PC-9 (cell line): ENCODE measurements at regions of chr12 and their contacts with region 1.

Region 1: GRCh38 chr12:31959161-31959700 is at the start of gene RESF1:
- DNase-seq: peak; percentile 76 to 95
- H3K4me3 ChIP-seq: peak within 1 kb of the TSS; percentile 86
- H3K27ac ChIP-seq: peak within 1 kb of the TSS; percentile 45
- H3K4me1 ChIP-seq: peaks cover 12% of the 10 kb centered on the region
- H3K27me3 ChIP-seq: no peaks in the 10 kb centered on the region
- CTCF ChIP-seq: no peak
- total RNA-seq, gene RESF1: 25.4 and 33.8 TPM in 2 replicates

Region 2: DNA sequence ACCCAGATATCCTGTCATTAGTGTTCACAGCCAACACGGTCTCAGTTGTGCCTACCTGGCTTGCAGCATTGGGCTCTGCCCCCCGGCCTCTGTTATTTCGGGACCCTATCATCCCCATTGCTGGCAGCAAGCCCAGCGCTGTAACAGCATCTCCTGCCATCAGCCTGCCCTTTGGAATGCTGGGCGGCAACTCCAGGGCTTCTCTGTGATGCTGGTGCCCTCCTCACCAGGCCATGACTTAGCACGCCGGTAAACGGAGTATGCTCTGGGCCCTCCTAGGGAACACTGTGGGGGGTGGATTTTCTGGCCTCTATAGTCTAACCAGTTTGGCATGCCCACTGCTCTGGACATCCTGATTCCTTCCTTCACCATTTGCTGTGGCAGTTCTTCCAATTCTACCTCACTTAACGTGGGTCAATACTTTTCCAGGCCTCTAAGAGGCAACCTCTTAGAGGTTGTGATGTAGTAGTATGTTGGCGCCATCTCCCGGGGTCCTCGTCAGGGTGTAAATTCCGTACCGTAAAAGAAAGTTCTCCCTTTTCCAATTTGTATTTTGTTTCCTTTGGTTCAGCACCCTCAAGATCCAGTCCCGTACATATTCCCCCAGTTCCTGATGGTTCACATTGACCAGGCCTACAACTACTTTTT is 713.3 kb before region 1 on chr12:
- CTCF ChIA-PET with region 1: no interaction called
- POLR2A ChIA-PET with region 1: no interaction called
- intact Hi-C with region 1: loop called (anchors 5 kb)
- DNase-seq: peak in 1 of 2 experiments; percentile 33
- H3K4me3 ChIP-seq: no peak overlapping the region
- H3K27ac ChIP-seq: no peak overlapping the region
- H3K4me1 ChIP-seq: no peaks in the 10 kb centered on the region
- H3K27me3 ChIP-seq: no peaks in the 10 kb centered on the region
- CTCF ChIP-seq: no peak

Region 3: DNA sequence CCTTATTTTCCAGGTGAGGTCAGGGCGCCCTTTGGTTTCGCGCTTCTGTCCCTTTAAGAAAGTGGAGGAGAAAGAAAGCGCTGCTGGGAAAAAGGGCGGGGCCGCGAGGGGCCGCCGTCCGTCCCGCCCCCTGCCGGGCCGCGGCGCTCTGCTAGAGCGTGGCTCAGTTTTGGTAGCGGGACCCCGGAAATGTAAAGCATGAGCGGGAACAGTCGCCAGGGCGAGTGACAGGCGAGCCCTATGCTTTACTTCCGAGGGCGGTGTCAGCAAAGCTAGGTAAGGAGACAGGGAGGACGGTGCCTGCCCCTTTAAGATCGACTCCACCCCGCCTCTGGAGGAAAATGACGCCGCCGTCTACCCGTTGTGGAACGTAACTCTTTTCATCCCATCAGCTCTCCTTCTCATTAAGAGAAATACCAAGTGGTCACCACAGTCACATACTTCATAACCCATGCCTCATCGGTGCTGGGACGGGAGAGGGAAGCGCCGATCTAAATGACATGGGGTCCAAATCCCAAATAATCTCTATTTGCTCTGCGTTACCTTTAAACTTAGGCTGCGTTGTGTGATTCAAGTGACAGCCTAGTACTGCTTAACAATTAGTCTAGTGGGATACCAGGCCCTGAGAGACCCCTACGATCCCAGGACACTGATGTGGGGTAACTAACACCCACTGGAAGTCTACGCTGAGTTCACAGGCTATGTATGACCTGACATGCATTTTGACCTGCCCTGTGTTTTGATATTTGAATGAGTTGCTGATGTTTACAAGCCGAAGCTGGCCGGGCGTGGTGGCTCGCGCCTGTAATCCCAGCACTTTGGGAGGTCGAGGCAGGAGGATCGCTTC is 299.9 kb before region 1 on chr12 and contains the start of gene ETFBKMT:
- CTCF ChIA-PET with region 1: no interaction called
- POLR2A ChIA-PET with region 1: no interaction called
- intact Hi-C with region 1: loop called (anchors 2 kb)
- DNase-seq: peak; percentile 94 to 97
- H3K4me3 ChIP-seq: peak within 1 kb of the TSS; percentile 62
- H3K27ac ChIP-seq: peak within 1 kb of the TSS; percentile 63
- H3K4me1 ChIP-seq: peaks cover 17% of the 10 kb centered on the region
- H3K27me3 ChIP-seq: no peaks in the 10 kb centered on the region
- CTCF ChIP-seq: peak; percentile 60
- total RNA-seq, gene ETFBKMT: 2.2 and 2.4 TPM in 2 replicates

Region 4: GRCh38 chr12:31682136-31682962 is 276.9 kb before region 1 on chr12:
- CTCF ChIA-PET with region 1: interaction called, 5 read pairs
- POLR2A ChIA-PET with region 1: interaction called, 6 read pairs
- intact Hi-C with region 1: loop called (anchors 2 kb)
- DNase-seq: peak; percentile 68 to 72
- H3K4me3 ChIP-seq: no peak overlapping the region
- H3K27ac ChIP-seq: no peak overlapping the region
- H3K4me1 ChIP-seq: no peaks in the 10 kb centered on the region
- H3K27me3 ChIP-seq: no peaks in the 10 kb centered on the region
- CTCF ChIP-seq: peak; percentile 87

Region 5: DNA sequence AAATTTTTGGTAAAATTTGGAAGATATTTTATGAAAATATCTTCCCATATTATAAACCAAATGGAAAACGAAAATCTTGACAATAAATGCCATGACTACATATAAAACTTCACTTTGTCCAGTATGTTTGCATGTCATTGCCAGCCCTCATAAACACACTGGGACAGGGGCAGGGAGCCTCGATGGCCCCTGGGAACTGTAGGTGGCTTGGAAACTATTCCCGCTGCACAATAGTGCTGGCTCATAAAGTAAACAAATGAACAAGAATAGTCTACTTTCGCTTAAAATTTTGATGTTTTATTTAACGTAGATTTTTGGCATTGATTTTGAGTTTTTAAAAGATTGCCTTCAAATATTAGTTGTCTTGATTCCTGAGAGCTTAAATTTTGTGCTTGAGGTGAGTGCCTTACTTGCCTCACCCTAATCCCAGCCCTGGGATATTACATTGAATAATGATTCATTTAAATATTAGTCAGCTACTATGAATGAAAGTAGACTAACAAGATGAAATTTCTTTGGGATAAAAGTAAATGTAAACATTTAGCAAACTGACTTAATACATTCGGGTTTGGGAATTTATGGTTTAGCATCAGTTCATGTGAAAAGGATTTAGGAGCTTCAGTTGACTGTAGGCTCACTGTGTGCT is 1011.4 kb after region 1 on chr12:
- CTCF ChIA-PET with region 1: no interaction called
- POLR2A ChIA-PET with region 1: no interaction called
- intact Hi-C with region 1: no loop called
- DNase-seq: no peak
- H3K4me3 ChIP-seq: no peak overlapping the region
- H3K27ac ChIP-seq: no peak overlapping the region
- H3K4me1 ChIP-seq: peaks cover 7% of the 10 kb centered on the region; the same call in 1 of the 2 replicates
- H3K27me3 ChIP-seq: no peaks in the 10 kb centered on the region
- CTCF ChIP-seq: no peak